PC-3 (cell line): ENCODE measurements at regions of chr2 and their contacts with region 1.

Region 1: GRCh38 chr2:19863303-19864041 is 38.3 kb downstream of the TTC32 start:
- DNase-seq: peak; percentile 73
- ATAC-seq: peak; percentile 84
- H3K4me3 ChIP-seq: peak overlapping the region; percentile 53
- H3K27ac ChIP-seq: no peak overlapping the region
- H3K4me1 ChIP-seq: peaks cover 15% of the 10 kb centered on the region
- H3K27me3 ChIP-seq: no peaks in the 10 kb centered on the region
- CTCF ChIP-seq: peak; percentile 96

Region 2: GRCh38 chr2:18435421-18436037 is 1427.9 kb before region 1 on chr2:
- CTCF ChIA-PET with region 1: no interaction called
- POLR2A ChIA-PET with region 1: no interaction called
- intact Hi-C with region 1: loop called (anchors 1 kb)
- DNase-seq: peak; percentile 82
- ATAC-seq: peak; percentile 61
- H3K4me3 ChIP-seq: no peak overlapping the region
- H3K27ac ChIP-seq: no peak overlapping the region
- H3K4me1 ChIP-seq: peaks cover 17% of the 10 kb centered on the region
- H3K27me3 ChIP-seq: no peaks in the 10 kb centered on the region
- CTCF ChIP-seq: peak; percentile 86

Region 3: DNA sequence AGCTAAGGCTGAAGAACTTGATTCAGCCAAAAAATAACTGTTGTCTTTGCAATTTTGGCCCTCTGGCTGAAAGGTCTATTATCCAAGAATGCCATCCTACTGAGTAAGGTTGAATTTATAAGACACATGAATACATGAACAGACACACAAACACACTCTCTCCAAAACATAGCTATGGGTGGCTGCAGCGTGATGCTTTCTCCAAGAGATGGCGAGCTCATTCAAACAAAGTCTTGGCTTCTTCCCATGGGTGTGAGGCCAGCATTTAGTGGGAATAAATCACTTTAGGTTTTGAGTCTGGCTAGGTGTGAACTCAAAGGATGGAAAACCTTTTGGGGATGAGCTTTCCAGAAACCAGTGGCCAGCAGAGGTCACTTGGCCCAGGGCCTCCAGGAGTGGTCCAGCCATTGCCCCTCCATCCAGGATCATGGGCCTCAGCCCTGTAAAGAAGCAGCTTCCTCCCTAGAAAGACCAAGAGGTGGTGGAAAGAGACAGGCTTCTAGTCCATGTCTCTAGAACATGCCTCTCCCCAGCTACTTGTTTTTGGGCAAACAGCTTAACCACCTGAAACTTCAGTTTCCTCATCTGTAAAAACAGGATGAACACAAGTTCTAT is 494.0 kb before region 1 on chr2:
- CTCF ChIA-PET with region 1: interaction called, 5 read pairs
- POLR2A ChIA-PET with region 1: no interaction called
- intact Hi-C with region 1: loop called (anchors 1 kb)
- DNase-seq: peak; percentile 68
- ATAC-seq: peak; percentile 74
- H3K4me3 ChIP-seq: no peak overlapping the region
- H3K27ac ChIP-seq: no peak overlapping the region
- H3K4me1 ChIP-seq: no peaks in the 10 kb centered on the region
- H3K27me3 ChIP-seq: no peaks in the 10 kb centered on the region
- CTCF ChIP-seq: peak; percentile 83

Region 4: DNA sequence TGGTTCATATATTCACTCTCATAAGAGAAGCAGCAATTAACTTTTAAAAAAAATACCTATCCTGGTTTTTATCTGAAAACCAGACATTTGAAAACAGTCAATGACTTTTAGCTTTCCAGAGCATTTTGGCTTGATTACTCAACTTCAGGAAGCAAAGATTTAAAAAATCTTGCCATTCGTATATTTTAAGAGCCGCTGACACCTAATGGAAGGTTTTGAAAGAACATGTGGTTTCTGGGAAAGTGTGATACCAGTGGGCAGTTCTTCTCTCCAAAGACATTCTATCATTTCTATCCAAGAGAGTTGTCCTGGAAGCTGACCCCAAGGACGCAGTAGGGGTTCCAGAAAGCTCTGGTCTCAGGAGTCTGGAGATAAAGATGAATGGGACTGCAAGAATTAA is 196.4 kb before region 1 on chr2:
- CTCF ChIA-PET with region 1: no interaction called
- POLR2A ChIA-PET with region 1: no interaction called
- intact Hi-C with region 1: loop called (anchors 1 kb)
- DNase-seq: peak; percentile 75
- ATAC-seq: peak; percentile 58
- H3K4me3 ChIP-seq: no peak overlapping the region
- H3K27ac ChIP-seq: no peak overlapping the region
- H3K4me1 ChIP-seq: peaks cover 26% of the 10 kb centered on the region
- H3K27me3 ChIP-seq: no peaks in the 10 kb centered on the region
- CTCF ChIP-seq: peak; percentile 74

Region 5: GRCh38 chr2:19937004-19937403 is 73.5 kb after region 1 on chr2:
- CTCF ChIA-PET with region 1: no interaction called
- POLR2A ChIA-PET with region 1: no interaction called
- intact Hi-C with region 1: no loop called
- DNase-seq: no peak
- ATAC-seq: no peak
- H3K4me3 ChIP-seq: no peak overlapping the region
- H3K27ac ChIP-seq: no peak overlapping the region
- H3K4me1 ChIP-seq: peaks cover 20% of the 10 kb centered on the region
- H3K27me3 ChIP-seq: no peaks in the 10 kb centered on the region
- CTCF ChIP-seq: no peak